Calu3 (cell line): ENCODE measurements at regions of chr2 and their contacts with region 1.

Region 1: GRCh38 chr2:184956856-184957255 is 358.5 kb downstream of the ZNF804A start:
- DNase-seq: no peak
- H3K4me3 Mint-ChIP-seq: no peak overlapping the region
- H3K27ac Mint-ChIP-seq: no peak overlapping the region
- H3K4me1 Mint-ChIP-seq: peaks cover 6% of the 10 kb centered on the region
- H3K27me3 Mint-ChIP-seq: no peaks in the 10 kb centered on the region
- CTCF ChIP-seq: no peak

Region 2: DNA sequence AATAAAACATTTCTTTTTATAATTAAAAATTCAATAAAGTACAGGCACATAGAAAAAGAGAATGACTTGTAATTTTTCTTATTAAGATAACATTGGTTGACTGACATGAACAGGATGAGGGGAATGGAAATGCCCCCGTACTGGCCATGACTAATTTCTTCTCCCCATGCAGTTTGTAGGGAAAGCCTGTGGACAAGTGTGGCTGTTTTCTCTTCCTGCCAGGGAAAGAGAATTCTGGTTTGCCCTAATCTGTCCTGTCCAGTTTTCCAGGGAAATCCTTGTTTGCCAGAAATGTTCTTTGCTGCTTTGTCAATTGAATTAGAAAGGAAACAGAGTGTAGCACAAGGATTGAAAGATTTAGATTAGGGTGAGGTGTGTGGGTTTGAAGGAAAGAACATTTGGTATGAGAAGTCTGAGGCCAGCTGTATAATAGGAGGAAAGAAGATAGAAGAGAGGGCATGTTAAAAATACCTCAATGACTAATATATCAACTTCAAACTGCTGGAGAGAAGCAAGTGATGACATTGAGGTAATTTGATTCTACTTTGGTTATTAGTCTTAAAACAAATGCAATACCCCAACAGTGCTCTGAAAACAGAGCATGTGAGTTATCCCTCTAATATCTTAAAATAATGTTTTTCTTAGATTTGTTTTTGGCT is 952.4 kb before region 1 on chr2:
- CTCF ChIA-PET with region 1: no interaction called
- intact Hi-C with region 1: no loop called
- DNase-seq: no peak
- H3K4me3 Mint-ChIP-seq: no peak overlapping the region
- H3K27ac Mint-ChIP-seq: no peak overlapping the region
- H3K4me1 Mint-ChIP-seq: no peaks in the 10 kb centered on the region
- H3K27me3 Mint-ChIP-seq: no peaks in the 10 kb centered on the region
- CTCF ChIP-seq: no peak

Region 3: GRCh38 chr2:185063761-185064160 is 106.9 kb after region 1 on chr2:
- CTCF ChIA-PET with region 1: no interaction called
- intact Hi-C with region 1: no loop called
- DNase-seq: no peak
- H3K4me3 Mint-ChIP-seq: no peak overlapping the region
- H3K27ac Mint-ChIP-seq: no peak overlapping the region
- H3K4me1 Mint-ChIP-seq: no peaks in the 10 kb centered on the region
- H3K27me3 Mint-ChIP-seq: no peaks in the 10 kb centered on the region
- CTCF ChIP-seq: no peak

Region 4: DNA sequence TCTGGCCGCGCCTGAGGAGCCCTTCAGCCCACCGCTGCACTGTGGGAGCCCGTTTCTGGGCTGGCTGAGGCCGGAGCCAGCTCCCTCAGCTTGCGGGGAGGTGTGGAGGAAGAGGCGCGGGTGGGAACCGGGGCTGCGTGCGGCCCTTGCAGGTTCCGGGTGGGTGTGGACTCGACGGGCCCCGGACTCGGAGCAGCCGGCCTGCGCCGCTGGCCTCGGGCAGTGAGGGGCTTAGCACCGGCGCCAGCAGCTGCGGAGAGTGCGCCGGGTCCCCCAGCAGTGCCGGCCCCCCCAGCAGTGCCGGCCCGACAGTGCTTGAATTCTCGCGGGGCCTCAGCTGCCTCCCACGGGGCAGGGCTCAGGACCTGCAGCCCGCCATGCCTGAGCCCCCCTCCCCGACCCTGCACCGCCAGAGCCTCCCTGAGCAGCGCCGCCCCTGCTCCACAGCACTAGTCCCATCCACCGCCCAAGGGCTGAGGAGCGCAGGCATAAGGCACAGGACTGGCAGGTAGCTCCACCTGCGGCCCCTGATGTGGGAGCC is 175.7 kb after region 1 on chr2:
- CTCF ChIA-PET with region 1: no interaction called
- intact Hi-C with region 1: loop called (anchors 10 kb)
- DNase-seq: no peak
- H3K4me3 Mint-ChIP-seq: no peak overlapping the region
- H3K27ac Mint-ChIP-seq: no peak overlapping the region
- H3K4me1 Mint-ChIP-seq: peaks cover 5% of the 10 kb centered on the region
- H3K27me3 Mint-ChIP-seq: no peaks in the 10 kb centered on the region
- CTCF ChIP-seq: no peak